Activated B cell treated with CpG ODN at 0.5 μM for 24 hours (primary cell): ENCODE measurements at regions of chr5 and their contacts with region 1.

Region 1: GRCh38 chr5:120096413-120096812 is 367.7 kb upstream of the PRR16 start:
- DNase-seq: no peak
- ATAC-seq: no peak
- H3K4me3 Mint-ChIP-seq: no peak overlapping the region
- H3K27ac Mint-ChIP-seq: no peak overlapping the region
- H3K4me1 Mint-ChIP-seq: peaks cover 18% of the 10 kb centered on the region
- H3K27me3 Mint-ChIP-seq: no peaks in the 10 kb centered on the region
- CTCF ChIP-seq: no peak

Region 2: DNA sequence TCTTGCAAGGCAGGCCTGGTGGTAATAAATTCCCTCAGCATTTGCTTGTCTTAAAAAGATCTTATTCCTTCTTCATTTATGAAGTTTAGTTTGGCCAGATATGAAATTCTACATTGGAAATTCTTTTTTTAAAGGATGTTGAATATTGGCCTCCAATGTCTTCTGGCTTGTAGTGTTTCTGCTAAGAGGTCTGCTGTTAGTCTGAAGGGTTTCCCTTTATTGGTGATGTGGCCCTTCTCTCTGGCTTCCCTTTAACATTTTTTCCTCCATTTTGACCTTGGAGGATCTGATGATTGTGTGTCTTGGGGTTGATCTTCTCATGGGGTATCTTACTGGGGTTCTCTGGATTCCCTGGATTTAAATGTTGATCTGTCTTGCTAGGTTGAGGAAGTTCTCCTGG is 334.2 kb after region 1 on chr5:
- CTCF ChIA-PET with region 1: no interaction called
- POLR2A ChIA-PET with region 1: no interaction called
- intact Hi-C with region 1: no loop called
- DNase-seq: no peak
- ATAC-seq: no peak
- H3K4me3 Mint-ChIP-seq: no peak overlapping the region
- H3K27ac Mint-ChIP-seq: no peak overlapping the region
- H3K4me1 Mint-ChIP-seq: no peaks in the 10 kb centered on the region
- H3K27me3 Mint-ChIP-seq: no peaks in the 10 kb centered on the region
- CTCF ChIP-seq: no peak

Region 3: DNA sequence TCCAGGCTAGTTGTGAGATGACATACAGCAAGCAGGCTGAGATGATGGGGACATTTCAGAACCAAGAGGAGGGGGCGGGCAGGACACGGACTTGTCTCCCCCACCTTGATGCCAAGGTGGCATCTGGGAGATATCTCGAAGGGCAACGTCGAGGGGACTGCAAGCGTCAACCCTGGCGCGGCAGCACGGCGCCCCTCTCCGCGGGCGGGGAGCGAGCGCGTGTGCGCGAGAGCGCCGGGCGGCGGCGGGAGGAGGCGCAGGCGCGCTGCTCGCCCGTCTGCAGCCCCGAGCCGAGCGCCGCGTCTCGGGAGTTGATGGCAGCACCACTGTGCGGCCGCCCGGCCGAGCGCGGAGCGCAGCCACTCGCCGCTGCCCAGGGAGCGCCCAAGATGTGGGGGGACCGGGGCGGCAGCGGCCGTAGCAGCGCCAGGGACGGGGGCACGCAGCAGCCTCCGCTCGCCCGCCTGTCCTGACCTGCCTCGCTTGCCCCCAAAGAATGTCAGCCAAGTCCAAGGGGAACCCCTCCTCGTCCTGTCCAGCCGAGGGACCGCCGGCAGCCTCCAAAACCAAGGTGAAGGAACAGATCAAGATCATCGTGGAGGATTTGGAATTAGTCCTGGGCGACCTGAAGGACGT is 367.7 kb after region 1 on chr5 and contains the start of gene PRR16:
- CTCF ChIA-PET with region 1: no interaction called
- POLR2A ChIA-PET with region 1: interaction called, 11 read pairs
- intact Hi-C with region 1: loop called (anchors 5 kb)
- DNase-seq: peak; percentile 47
- ATAC-seq: peak; percentile 83
- H3K4me3 Mint-ChIP-seq: peak within 1 kb of the TSS; percentile 85
- H3K27ac Mint-ChIP-seq: peak within 1 kb of the TSS; percentile 42
- H3K4me1 Mint-ChIP-seq: peaks cover 29% of the 10 kb centered on the region
- H3K27me3 Mint-ChIP-seq: peaks cover 17% of the 10 kb centered on the region
- CTCF ChIP-seq: no peak
- total RNA-seq, gene PRR16: 0.15 and 0.29 TPM in 2 replicates